Naive thymus-derived CD8-positive, alpha-beta T cell (primary cell): ENCODE measurements at regions of chr19 and their contacts with region 1.

Region 1: DNA sequence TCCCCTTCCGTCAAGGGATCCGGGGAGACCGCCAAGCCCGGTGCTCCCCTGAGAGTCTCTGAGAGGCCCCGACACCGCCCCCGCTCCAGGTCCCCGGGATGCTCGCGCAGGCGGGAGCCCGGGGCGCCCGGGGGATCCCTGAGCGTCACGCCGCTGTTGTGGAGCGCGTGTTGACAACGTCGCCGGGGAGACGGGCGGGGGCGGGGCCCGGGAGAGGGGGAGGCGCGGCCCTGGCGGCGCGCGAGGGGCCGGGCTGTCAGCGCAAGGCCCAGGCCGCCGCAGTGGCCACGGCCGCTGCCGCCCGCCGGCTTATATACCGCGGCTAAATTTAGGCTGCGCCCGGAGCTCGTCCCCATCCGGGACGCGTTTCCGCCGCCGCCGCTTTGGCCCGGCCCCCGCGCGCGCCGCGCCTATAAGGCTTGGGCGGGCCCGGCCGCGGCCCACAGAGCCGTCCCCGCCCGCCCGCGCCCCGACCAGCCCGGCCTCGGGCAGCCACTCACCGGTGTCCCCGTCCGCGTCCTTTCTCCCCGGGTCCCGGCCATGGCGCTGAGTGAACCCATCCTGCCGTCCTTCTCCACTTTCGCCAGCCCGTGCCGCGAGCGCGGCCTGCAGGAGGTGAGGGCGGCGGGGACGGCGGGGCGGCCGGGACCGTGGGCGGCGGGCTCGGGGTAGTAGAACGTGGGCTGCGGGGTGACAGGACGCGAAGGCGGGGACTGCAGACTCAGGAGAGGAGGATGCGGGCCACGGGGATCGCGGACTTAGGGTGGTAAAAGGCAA is at the start of gene KLF2:
- DNase-seq: peak; percentile 91 to 98 (median 95)
- ATAC-seq: peak; percentile 58 to 67
- H3K4me3 Mint-ChIP-seq: peak within 1 kb of the TSS; percentile 56 to 100 (median 82)
- H3K27ac Mint-ChIP-seq: peak within 1 kb of the TSS; percentile 74 to 100 (median 98)
- H3K4me1 Mint-ChIP-seq: peaks cover 23 to 64% (median 56%) of the 10 kb centered on the region in 4 donors
- H3K27me3 Mint-ChIP-seq: peaks cover 0 to 11% (median 0%) of the 10 kb centered on the region in 5 donors
- polyA plus RNA-seq, gene KLF2: 115 to 216 (median 166) TPM

Region 2: GRCh38 chr19:16185123-16185767 is 139.3 kb before region 1 on chr19 and contains the start of gene FAM32A:
- POLR2A ChIA-PET with region 1: interaction called, 24 read pairs
- DNase-seq: peak; percentile 88 to 100 (median 99)
- ATAC-seq: peak; percentile 90 to 91
- H3K4me3 Mint-ChIP-seq: peak within 1 kb of the TSS; percentile 95 to 100 (median 98)
- H3K27ac Mint-ChIP-seq: peak within 1 kb of the TSS; percentile 95 to 99 (median 98)
- H3K4me1 Mint-ChIP-seq: peaks cover 17 to 48% (median 36%) of the 10 kb centered on the region in 4 donors
- H3K27me3 Mint-ChIP-seq: peaks cover 0 to 1% (median 0%) of the 10 kb centered on the region in 5 donors
- polyA plus RNA-seq, gene FAM32A: 150 to 205 (median 183) TPM

Region 3: GRCh38 chr19:16233836-16234551 is 90.6 kb before region 1 on chr19:
- POLR2A ChIA-PET with region 1: interaction called, 14 read pairs
- DNase-seq: peak in 3 of 10 donors; percentile 7 to 29 (median 15)
- ATAC-seq: peak in 1 of 2 donors; percentile 16
- H3K4me3 Mint-ChIP-seq: peak overlapping the region in 5 of 10 donors; percentile 14 to 66 (median 47)
- H3K27ac Mint-ChIP-seq: peak overlapping the region; percentile 90 to 99 (median 93)
- H3K4me1 Mint-ChIP-seq: peaks cover 32 to 73% (median 56%) of the 10 kb centered on the region in 4 donors
- H3K27me3 Mint-ChIP-seq: no peaks in the 10 kb centered on the region

Region 4: GRCh38 chr19:16259385-16260159 is 65.0 kb before region 1 on chr19:
- POLR2A ChIA-PET with region 1: interaction called, 32 read pairs
- DNase-seq: no peak
- ATAC-seq: peak in 1 of 2 donors; percentile 25
- H3K4me3 Mint-ChIP-seq: peak overlapping the region in 3 of 10 donors; percentile 24 to 60 (median 33)
- H3K27ac Mint-ChIP-seq: peak overlapping the region in 4 of 10 donors; percentile 43 to 72 (median 63)
- H3K4me1 Mint-ChIP-seq: peaks cover 22 to 72% (median 56%) of the 10 kb centered on the region in 4 donors
- H3K27me3 Mint-ChIP-seq: no peaks in the 10 kb centered on the region

Region 5: GRCh38 chr19:16283210-16284061 is 41.1 kb before region 1 on chr19:
- POLR2A ChIA-PET with region 1: interaction called, 24 read pairs
- DNase-seq: peak; percentile 27 to 79 (median 64)
- ATAC-seq: peak; percentile 85 to 88
- H3K4me3 Mint-ChIP-seq: peak overlapping the region; percentile 57 to 87 (median 76)
- H3K27ac Mint-ChIP-seq: peak overlapping the region; percentile 59 to 97 (median 92)
- H3K4me1 Mint-ChIP-seq: peaks cover 21 to 60% (median 44%) of the 10 kb centered on the region in 4 donors
- H3K27me3 Mint-ChIP-seq: peaks cover 0 to 12% (median 2%) of the 10 kb centered on the region in 5 donors

Region 6: DNA sequence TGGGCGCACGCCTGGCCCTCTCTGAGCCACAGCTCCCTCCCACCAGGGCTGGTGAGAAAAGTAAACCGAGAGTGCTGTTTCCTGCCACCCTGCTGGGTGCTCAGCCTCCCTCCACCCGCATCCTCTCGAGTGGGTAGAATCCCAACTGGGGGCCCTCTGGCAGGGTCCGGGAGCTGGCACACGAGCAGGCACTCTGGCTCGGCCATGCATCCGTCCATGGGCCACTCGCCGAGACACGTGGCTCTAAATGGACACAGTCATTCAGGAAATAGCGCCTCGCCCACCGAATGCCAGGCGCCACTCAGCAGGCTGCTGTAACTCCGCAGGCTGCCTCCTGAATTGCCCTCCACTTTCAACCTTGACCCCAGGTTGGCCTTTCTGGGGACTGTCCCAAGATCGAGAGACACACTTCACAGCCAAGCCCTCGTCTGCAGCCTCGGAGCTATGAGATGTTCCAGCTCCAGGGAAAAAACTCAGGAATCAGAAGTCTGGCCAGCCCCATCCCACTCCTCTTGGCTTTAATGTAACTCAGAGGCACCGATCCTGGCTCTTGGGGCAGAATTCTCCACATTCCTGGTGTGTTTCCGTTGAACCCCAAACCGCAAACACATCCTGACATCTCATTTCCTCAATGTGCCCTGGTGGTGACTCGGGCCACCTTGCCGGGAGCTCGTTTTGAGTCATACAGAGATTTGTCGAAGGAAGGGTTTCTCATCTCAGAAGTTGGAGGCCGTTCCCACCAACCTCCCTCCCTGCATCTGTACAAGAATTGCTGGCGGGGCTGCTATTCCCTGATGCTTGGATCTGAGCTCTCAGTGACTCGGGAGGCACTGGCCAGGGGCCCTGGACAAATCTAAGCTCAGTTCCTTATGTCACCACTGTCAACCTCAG is 14.1 kb after region 1 on chr19:
- POLR2A ChIA-PET with region 1: interaction called, 423 read pairs
- DNase-seq: peak in 6 of 10 donors; percentile 29 to 62 (median 52)
- ATAC-seq: peak; percentile 65 to 66
- H3K4me3 Mint-ChIP-seq: peak overlapping the region; percentile 70 to 89 (median 88)
- H3K27ac Mint-ChIP-seq: peak overlapping the region; percentile 89 to 98 (median 95)
- H3K4me1 Mint-ChIP-seq: peaks cover 35 to 79% (median 77%) of the 10 kb centered on the region in 4 donors
- H3K27me3 Mint-ChIP-seq: no peaks in the 10 kb centered on the region

Region 7: DNA sequence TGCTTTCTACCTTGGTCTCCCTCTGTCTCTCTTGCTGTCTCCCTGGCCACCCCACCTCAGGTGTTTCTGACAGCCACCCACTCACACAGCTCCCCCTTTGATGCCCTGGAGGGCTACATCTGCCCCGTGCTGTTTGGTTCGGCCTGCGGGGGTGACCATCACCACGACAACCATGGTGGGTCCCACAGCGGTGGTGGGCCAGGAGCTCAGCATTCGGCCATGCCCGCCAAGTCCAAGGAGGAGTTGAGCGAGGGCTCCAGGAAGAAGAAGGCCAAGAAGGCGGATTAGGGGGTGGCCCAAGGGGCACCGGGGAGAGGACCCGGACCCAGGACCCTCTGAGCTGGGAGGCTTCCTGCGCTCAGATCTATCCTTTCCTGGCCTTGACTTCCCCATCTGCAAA is 363.5 kb after region 1 on chr19:
- POLR2A ChIA-PET with region 1: no interaction called
- DNase-seq: no peak
- ATAC-seq: no peak
- H3K4me3 Mint-ChIP-seq: no peak overlapping the region
- H3K27ac Mint-ChIP-seq: no peak overlapping the region
- H3K4me1 Mint-ChIP-seq: peaks cover 0 to 2% (median 0%) of the 10 kb centered on the region in 4 donors
- H3K27me3 Mint-ChIP-seq: no peaks in the 10 kb centered on the region